Dendritic cell treated with granulocyte-macrophage colony-stimulating factor and Interleukin-4, amounts not matched to agents 40 ng/mL and 50 ng/mL, for 4 days (primary cell): ENCODE measurements at regions of chr9 and their contacts with region 1.

Region 1: DNA sequence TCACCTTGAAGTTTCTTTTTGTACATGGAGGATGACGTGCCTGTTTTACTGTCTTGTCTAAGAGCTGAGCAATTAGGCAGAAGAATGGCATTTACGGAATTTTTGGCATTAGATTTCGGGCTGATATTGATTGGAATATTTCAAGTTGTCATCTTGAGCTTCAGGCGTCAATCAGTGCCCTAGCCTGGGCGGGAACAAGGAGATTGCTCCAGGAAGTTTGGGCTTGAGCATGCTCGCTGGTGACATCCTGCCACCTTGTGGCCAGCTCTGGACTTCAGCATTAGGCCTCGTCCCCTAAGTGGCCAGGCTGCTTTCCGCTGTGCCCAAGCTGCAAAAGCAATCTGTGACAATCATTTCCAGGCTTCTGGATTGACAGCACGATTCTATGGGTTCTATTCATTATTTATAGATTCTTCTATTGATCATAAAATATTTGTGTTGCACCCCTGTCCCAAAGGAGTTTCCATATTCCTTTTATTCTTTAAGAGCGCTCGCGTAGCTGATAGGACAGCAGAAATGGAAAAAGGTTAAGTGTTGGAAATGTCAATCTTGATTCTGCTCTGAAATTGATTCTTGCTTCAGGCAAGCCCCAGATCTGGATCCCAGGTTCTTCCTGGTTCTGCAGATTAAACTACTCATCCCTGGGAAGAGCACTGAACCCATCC is 79.3 kb downstream of the SLC28A3 start:
- H3K4me3 Mint-ChIP-seq: peak overlapping the region; percentile 34
- H3K27ac Mint-ChIP-seq: no peak overlapping the region
- H3K4me1 Mint-ChIP-seq: peaks cover 8% of the 10 kb centered on the region
- H3K27me3 Mint-ChIP-seq: peaks cover 3% of the 10 kb centered on the region

Region 2: GRCh38 chr9:84315278-84315877 is 54.2 kb after region 1 on chr9:
- intact Hi-C with region 1: loop called (anchors 1 kb)
- H3K4me3 Mint-ChIP-seq: no peak overlapping the region
- H3K27ac Mint-ChIP-seq: no peak overlapping the region
- H3K4me1 Mint-ChIP-seq: peaks cover 19% of the 10 kb centered on the region
- H3K27me3 Mint-ChIP-seq: no peaks in the 10 kb centered on the region